CD4-positive, alpha-beta memory T cell (primary cell): ENCODE measurements at regions of chr4 and their contacts with region 1.

Region 1: GRCh38 chr4:164012396-164013027 is 518.0 kb downstream of the TMA16 start:
- DNase-seq: peak in 3 of 5 donors; percentile 9 to 24 (median 19)
- H3K4me3 ChIP-seq: no peak overlapping the region
- H3K4me3 Mint-ChIP-seq: no peak overlapping the region
- H3K27ac ChIP-seq: no peak overlapping the region
- H3K27ac Mint-ChIP-seq: no peak overlapping the region
- H3K4me1 ChIP-seq: peaks cover 13% of the 10 kb centered on the region
- H3K4me1 Mint-ChIP-seq: peaks cover 3 to 34% (median 19%) of the 10 kb centered on the region in 4 donors
- H3K27me3 ChIP-seq: no peaks in the 10 kb centered on the region
- H3K27me3 Mint-ChIP-seq: peaks cover 0 to 3% of the 10 kb centered on the region in 2 donors

Region 2: DNA sequence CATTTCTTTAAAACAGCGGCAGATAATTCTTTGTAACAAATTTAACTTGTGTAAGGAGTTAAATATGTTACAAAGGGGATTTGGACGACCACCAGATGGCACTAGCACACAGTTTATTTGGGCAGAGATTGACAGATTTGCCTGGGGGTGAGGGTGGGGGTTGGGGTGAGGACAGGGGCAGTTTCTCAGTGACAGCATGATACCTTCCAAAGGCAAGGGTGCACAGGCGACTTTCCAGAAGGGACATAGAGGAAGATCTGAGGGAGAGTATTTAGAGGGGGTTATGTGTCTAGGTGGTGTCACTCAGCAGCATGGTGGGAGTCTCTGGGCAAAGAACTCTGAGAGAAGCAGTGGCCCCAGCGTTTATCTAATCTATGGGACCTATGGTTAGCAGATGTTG is 527.6 kb before region 1 on chr4:
- CTCF ChIA-PET with region 1: no interaction called
- POLR2A ChIA-PET with region 1: no interaction called
- intact Hi-C with region 1: loop called (anchors 10 kb)
- DNase-seq: peak in 4 of 5 donors; percentile 29 to 36 (median 34)
- H3K4me3 ChIP-seq: no peak overlapping the region
- H3K4me3 Mint-ChIP-seq: no peak overlapping the region
- H3K27ac ChIP-seq: no peak overlapping the region
- H3K27ac Mint-ChIP-seq: no peak overlapping the region
- H3K4me1 ChIP-seq: no peaks in the 10 kb centered on the region
- H3K4me1 Mint-ChIP-seq: peaks cover 0 to 3% (median 0%) of the 10 kb centered on the region in 4 donors
- H3K27me3 ChIP-seq: no peaks in the 10 kb centered on the region
- H3K27me3 Mint-ChIP-seq: peaks cover 0 to 1% of the 10 kb centered on the region in 2 donors

Region 3: GRCh38 chr4:163681208-163681821 is 331.2 kb before region 1 on chr4:
- CTCF ChIA-PET with region 1: no interaction called
- POLR2A ChIA-PET with region 1: no interaction called
- intact Hi-C with region 1: loop called (anchors 1 kb)
- DNase-seq: peak; percentile 28 to 66 (median 65)
- H3K4me3 ChIP-seq: no peak overlapping the region
- H3K4me3 Mint-ChIP-seq: no peak overlapping the region
- H3K27ac ChIP-seq: no peak overlapping the region
- H3K27ac Mint-ChIP-seq: no peak overlapping the region
- H3K4me1 ChIP-seq: no peaks in the 10 kb centered on the region
- H3K4me1 Mint-ChIP-seq: peaks cover 1 to 9% (median 4%) of the 10 kb centered on the region in 4 donors
- H3K27me3 ChIP-seq: no peaks in the 10 kb centered on the region
- H3K27me3 Mint-ChIP-seq: peaks cover 2 to 7% of the 10 kb centered on the region in 2 donors

Region 4: DNA sequence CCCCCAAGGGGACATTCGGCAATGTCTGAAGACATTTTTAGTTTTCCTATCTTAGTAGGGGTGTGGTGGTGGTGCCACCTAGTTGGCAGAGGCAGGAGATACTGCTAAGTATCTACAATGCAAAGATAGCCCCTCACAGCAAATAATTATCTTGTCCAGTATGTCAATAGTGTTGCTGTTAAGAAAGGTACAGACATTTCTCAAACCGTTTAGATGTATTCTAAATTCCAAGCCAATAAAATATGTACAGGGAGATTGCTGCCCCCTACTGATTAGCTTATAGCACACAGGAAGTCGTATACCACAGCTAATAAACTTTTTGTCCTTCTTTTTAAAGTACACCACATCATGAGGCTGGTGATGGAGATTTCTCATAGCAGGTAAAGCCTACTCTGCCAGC is 257.5 kb before region 1 on chr4:
- CTCF ChIA-PET with region 1: no interaction called
- POLR2A ChIA-PET with region 1: no interaction called
- intact Hi-C with region 1: loop called (anchors 1 kb)
- DNase-seq: peak in 4 of 5 donors; percentile 32 to 43 (median 38)
- H3K4me3 ChIP-seq: no peak overlapping the region
- H3K4me3 Mint-ChIP-seq: peak overlapping the region in 2 of 8 donors; percentile 29 to 39
- H3K27ac ChIP-seq: no peak overlapping the region
- H3K27ac Mint-ChIP-seq: no peak overlapping the region
- H3K4me1 ChIP-seq: no peaks in the 10 kb centered on the region
- H3K4me1 Mint-ChIP-seq: peaks cover 0 to 8% (median 3%) of the 10 kb centered on the region in 4 donors
- H3K27me3 ChIP-seq: no peaks in the 10 kb centered on the region
- H3K27me3 Mint-ChIP-seq: peaks cover 0 to 2% of the 10 kb centered on the region in 2 donors

Region 5: GRCh38 chr4:163815776-163816175 is 196.7 kb before region 1 on chr4:
- CTCF ChIA-PET with region 1: no interaction called
- POLR2A ChIA-PET with region 1: no interaction called
- intact Hi-C with region 1: loop called (anchors 1 kb)
- DNase-seq: no peak
- H3K4me3 ChIP-seq: no peak overlapping the region
- H3K4me3 Mint-ChIP-seq: no peak overlapping the region
- H3K27ac ChIP-seq: no peak overlapping the region
- H3K27ac Mint-ChIP-seq: no peak overlapping the region
- H3K4me1 ChIP-seq: no peaks in the 10 kb centered on the region
- H3K4me1 Mint-ChIP-seq: no peaks in the 10 kb centered on the region
- H3K27me3 ChIP-seq: no peaks in the 10 kb centered on the region
- H3K27me3 Mint-ChIP-seq: no peaks in the 10 kb centered on the region

Region 6: DNA sequence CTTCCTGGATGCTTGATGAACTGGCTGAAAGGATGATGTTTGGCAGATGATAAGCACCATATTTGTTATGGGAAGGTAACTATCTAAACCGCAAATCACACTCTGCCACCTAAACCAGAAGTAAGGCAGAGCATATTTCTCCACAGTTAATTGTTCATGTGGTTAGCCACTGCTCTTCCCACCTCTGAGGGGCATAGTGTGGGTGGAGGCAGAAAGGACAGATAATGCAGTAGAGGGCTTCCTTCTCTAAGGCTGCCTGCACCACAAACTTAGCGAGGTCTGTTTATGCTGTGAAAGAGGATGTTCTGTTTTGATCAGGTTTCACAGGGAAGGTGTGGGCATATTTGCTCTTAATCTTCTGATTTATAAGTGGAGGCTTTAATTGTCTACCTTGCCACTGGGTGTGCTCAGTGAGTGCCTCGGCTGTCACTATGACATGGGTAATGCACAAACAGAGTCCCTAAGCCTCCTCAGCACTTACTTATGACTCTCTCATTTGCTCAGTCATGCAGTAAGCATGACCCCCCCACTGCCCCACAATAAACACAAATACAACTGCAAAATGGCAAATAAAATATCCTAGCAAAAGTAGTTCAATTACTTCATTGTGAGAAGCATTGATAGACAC is 117.0 kb before region 1 on chr4:
- CTCF ChIA-PET with region 1: no interaction called
- POLR2A ChIA-PET with region 1: no interaction called
- intact Hi-C with region 1: loop called (anchors 1 kb)
- DNase-seq: peak; percentile 48 to 75 (median 60)
- H3K4me3 ChIP-seq: no peak overlapping the region
- H3K4me3 Mint-ChIP-seq: peak overlapping the region in 5 of 8 donors; percentile 0 to 74 (median 61)
- H3K27ac ChIP-seq: no peak overlapping the region
- H3K27ac Mint-ChIP-seq: peak overlapping the region in 6 of 7 donors; percentile 26 to 65 (median 48)
- H3K4me1 ChIP-seq: peaks cover 23% of the 10 kb centered on the region
- H3K4me1 Mint-ChIP-seq: peaks cover 10 to 29% (median 24%) of the 10 kb centered on the region in 4 donors
- H3K27me3 ChIP-seq: no peaks in the 10 kb centered on the region
- H3K27me3 Mint-ChIP-seq: peaks cover 0 to 1% of the 10 kb centered on the region in 2 donors

Region 7: GRCh38 chr4:164039482-164039881 is 27.0 kb after region 1 on chr4:
- CTCF ChIA-PET with region 1: no interaction called
- POLR2A ChIA-PET with region 1: no interaction called
- intact Hi-C with region 1: no loop called
- DNase-seq: no peak
- H3K4me3 ChIP-seq: no peak overlapping the region
- H3K4me3 Mint-ChIP-seq: no peak overlapping the region
- H3K27ac ChIP-seq: no peak overlapping the region
- H3K27ac Mint-ChIP-seq: no peak overlapping the region
- H3K4me1 ChIP-seq: no peaks in the 10 kb centered on the region
- H3K4me1 Mint-ChIP-seq: no peaks in the 10 kb centered on the region
- H3K27me3 ChIP-seq: no peaks in the 10 kb centered on the region
- H3K27me3 Mint-ChIP-seq: no peaks in the 10 kb centered on the region